MCF 10A (cell line): ENCODE measurements at regions of chr3 and their contacts with region 1.

Region 1: GRCh38 chr3:48429317-48429959 is 448 bp downstream of the PLXNB1 start:
- DNase-seq: peak; percentile 69
- H3K4me3 Mint-ChIP-seq: peak overlapping the region; percentile 99
- H3K27ac Mint-ChIP-seq: peak overlapping the region; percentile 98
- H3K4me1 Mint-ChIP-seq: peaks cover 71% of the 10 kb centered on the region
- H3K27me3 Mint-ChIP-seq: no peaks in the 10 kb centered on the region
- CTCF ChIP-seq: no peak

Region 2: GRCh38 chr3:48301020-48301796 is 128.2 kb before region 1 on chr3:
- CTCF ChIA-PET with region 1: interaction called, 10 read pairs
- POLR2A ChIA-PET with region 1: interaction called, 18 read pairs
- intact Hi-C with region 1: no loop called
- DNase-seq: peak; percentile 92
- H3K4me3 Mint-ChIP-seq: peak within 1 kb of the TSS; percentile 97
- H3K27ac Mint-ChIP-seq: peak within 1 kb of the TSS; percentile 99
- H3K4me1 Mint-ChIP-seq: peaks cover 24% of the 10 kb centered on the region
- H3K27me3 Mint-ChIP-seq: no peaks in the 10 kb centered on the region
- CTCF ChIP-seq: no peak

Region 3: DNA sequence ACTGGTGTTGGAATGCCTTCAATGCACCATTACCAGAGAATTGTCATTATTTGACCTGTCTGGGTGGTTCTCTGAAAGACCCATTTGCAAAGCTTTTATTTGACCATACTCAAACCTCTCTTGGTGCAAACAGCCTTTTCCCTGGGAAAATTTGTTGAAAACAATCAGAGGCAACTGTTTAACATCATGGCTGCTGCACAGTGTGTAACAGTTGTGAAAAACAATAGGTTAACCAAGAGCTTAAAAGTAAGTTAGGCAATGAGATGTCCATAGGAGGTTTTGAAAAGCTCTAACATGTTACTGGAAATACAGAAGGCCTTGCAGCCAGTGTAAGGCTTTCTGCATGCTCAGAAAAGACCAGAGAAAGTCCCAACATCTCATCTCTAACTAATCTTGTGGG is 114.9 kb before region 1 on chr3:
- CTCF ChIA-PET with region 1: no interaction called
- POLR2A ChIA-PET with region 1: no interaction called
- intact Hi-C with region 1: no loop called
- DNase-seq: no peak
- H3K4me3 Mint-ChIP-seq: no peak overlapping the region
- H3K27ac Mint-ChIP-seq: no peak overlapping the region
- H3K4me1 Mint-ChIP-seq: no peaks in the 10 kb centered on the region
- H3K27me3 Mint-ChIP-seq: no peaks in the 10 kb centered on the region
- CTCF ChIP-seq: no peak

Region 4: DNA sequence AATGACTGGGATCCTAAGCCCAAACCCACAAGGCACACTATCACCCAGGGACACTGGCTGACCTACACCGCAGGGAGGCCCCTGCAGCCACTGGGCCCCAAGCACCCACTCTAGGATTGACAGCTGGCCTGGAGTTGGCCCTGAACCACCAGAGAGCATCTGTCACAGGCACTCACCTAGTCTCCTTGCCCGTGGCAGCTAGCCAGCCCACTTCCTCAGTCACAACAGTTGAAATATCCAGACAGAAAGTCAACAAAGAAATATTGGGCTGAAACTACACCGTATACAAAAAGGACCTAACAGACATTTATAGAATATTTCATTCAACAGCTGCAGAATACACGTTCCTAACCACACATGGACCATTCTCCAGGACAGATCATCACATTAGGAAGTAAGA is 90.8 kb before region 1 on chr3:
- CTCF ChIA-PET with region 1: no interaction called
- POLR2A ChIA-PET with region 1: no interaction called
- intact Hi-C with region 1: no loop called
- DNase-seq: no peak
- H3K4me3 Mint-ChIP-seq: no peak overlapping the region
- H3K27ac Mint-ChIP-seq: no peak overlapping the region
- H3K4me1 Mint-ChIP-seq: no peaks in the 10 kb centered on the region
- H3K27me3 Mint-ChIP-seq: peaks cover 10% of the 10 kb centered on the region
- CTCF ChIP-seq: no peak